ENCODE measurements at regions of chr17 and their contacts with region 1.

Region 1: GRCh38 chr17:38824899-38825761 is at the start of gene CWC25:
- H3K4me3 Mint-ChIP-seq: peak within 1 kb of the TSS; percentile 98
- H3K27ac Mint-ChIP-seq: peak within 1 kb of the TSS; percentile 100
- H3K4me1 Mint-ChIP-seq: peaks cover 29% of the 10 kb centered on the region
- H3K27me3 Mint-ChIP-seq: peaks cover 3% of the 10 kb centered on the region

Region 2: GRCh38 chr17:38799378-38800236 is 25.5 kb before region 1 on chr17 and contains the start of gene PIP4K2B:
- intact Hi-C with region 1: loop called (anchors 2 kb)
- H3K4me3 Mint-ChIP-seq: peak within 1 kb of the TSS; percentile 92
- H3K27ac Mint-ChIP-seq: peak within 1 kb of the TSS; percentile 86
- H3K4me1 Mint-ChIP-seq: peaks cover 37% of the 10 kb centered on the region
- H3K27me3 Mint-ChIP-seq: no peaks in the 10 kb centered on the region

Region 3: DNA sequence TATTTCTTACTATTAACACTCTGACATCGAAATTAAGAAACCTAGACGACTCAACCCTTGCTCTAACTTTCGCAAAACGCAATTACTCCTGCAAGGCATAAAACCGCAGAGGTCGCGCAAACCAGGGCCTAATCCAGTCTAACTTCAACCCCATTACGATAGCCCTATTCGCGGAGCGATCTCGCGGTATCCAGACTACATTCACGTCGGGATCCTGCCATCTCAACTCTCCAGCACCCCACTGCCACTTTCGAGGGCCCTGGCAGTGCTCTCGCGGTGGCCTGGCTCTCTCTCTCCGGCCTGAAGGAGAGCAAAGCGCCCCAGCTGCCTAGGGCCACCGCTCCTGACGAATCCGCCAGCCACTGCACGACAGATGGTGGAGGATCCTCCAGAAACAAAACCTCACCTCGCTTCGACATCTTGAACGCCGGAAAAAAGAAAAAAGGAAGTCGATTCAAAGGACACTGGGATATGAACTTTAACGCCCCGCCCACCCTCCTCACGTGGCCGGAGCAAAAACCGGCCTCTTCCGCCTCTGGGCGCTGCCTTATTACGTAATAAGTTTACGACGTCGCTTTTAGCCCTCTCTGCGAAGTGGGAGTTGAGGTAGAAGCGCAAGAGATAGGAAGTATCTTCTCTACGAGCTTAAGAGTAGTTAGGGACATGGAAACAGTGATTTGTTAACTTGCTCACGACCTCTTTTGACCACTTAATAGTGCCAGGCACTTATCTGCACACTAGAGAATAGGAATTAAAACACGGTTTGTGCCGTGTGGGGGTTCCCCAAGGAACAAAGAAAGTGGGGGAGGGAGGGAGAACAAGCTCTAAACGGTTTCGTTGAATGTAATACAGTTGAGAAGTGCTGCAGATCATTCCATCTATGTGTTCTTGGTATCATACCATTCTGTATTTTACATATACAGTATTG is 28.4 kb after region 1 on chr17 and contains the start of gene RPL23:
- intact Hi-C with region 1: loop called (anchors 1 kb)
- H3K4me3 Mint-ChIP-seq: peak within 1 kb of the TSS; percentile 98
- H3K27ac Mint-ChIP-seq: peak within 1 kb of the TSS; percentile 97
- H3K4me1 Mint-ChIP-seq: peaks cover 58% of the 10 kb centered on the region
- H3K27me3 Mint-ChIP-seq: no peaks in the 10 kb centered on the region

Region 4: DNA sequence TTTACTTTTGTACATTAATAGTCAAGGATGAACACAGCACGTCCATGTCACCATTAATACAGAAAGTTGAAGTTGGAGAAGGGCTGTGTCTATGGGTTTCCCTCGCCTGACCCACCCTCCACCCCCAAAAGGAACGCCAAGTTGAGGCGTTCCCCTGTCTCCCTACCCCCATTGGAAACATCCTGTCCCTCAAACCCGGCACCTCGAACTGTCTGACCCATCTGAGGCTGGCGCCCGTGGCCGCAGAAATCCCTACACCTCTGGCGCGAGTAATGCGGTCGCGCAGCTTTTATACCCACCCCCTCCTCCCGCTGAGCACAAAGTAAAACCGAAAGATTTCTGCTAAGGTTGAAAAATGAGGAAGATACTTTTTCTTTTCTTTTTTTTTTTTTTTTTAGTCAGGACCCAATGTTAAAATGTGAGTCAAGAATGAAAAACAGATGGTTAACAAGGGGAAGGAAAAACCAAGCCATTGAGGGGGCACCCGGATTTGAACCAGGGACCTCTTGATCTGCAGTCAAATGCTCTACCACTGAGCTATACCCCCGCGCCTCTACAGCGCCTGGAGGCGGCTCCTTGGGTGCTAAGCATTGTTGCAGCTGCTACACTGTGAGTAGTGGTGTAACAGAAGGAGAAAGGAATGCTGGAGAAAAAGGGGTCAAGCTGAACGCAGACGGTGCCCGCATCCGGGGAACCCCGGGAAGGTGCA is 43.8 kb after region 1 on chr17:
- intact Hi-C with region 1: loop called (anchors 1 kb)
- H3K4me3 Mint-ChIP-seq: peak overlapping the region; percentile 100
- H3K27ac Mint-ChIP-seq: peak overlapping the region; percentile 97
- H3K4me1 Mint-ChIP-seq: peaks cover 50% of the 10 kb centered on the region
- H3K27me3 Mint-ChIP-seq: peaks cover 3% of the 10 kb centered on the region

Region 5: DNA sequence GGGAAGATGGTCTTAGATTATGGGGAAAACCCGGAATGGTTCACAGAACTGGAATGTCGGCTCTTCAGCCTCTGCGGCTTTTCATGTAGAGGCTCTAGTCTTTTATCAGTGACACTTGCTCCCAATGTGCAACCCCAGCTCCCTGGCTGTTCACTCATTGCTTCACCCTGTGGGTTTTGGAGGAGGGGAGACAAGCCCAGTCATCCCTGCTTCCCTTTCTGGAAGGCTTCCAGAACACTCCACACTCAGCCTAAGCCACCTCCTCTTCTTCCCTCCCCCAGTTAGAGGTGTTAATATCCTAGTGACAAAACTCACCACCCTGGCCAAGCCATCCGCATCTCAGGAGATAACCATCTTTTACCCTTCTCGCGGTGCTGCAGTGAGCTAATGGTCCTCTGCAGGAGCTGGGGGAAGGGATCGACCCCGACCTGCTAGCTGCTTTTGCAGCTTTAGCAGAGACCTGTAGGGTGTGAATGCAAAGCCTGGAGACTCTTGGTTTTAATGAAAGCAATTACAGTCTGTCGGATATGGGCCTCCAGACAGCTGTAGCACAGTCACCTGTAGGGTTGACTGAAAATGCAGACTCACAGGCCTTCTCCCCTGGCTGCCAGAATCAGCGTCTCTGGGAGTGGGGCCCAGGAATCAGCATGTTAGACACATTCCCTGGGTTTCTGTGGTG is 76.0 kb after region 1 on chr17:
- intact Hi-C with region 1: loop called (anchors 10 kb)
- H3K4me3 Mint-ChIP-seq: peak overlapping the region; percentile 39
- H3K27ac Mint-ChIP-seq: peak overlapping the region; percentile 82
- H3K4me1 Mint-ChIP-seq: peaks cover 65% of the 10 kb centered on the region
- H3K27me3 Mint-ChIP-seq: no peaks in the 10 kb centered on the region